ENCODE measurements at regions of chr18 and their contacts with region 1.

Region 1: DNA sequence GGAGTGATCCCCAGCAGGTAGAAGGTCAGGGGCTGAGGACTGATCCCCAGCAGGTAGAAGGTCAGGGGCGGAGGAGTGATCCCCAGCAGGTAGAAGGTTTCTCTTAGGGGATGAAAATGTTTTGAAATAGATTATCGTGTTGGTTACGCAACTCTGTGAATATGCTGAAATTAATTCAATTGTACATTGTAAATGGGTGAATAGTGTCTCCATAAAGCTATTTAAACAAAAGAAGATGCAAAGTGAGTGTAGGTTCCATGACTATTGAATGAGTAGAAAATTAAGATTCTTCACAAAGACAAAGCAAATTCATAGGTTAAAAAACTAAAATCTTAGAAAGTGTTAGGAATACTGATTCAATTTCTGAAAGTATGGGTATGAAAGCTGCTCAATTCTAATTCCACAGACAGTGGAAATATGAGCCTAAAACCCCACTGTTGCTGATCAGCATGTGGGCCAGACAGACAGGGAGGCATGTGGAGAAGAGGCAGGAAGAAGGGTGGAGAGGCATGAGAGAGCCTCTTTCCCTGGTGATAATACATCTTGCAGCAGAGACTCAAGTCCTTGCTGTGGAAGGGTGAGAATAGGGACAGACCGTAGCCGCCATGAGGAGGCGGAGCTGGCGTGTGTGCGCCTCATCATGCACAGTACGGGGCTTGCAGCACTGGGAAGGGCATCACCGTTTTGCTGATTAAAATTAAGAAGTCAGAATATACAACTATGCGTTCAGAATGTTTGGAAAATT is 85.9 kb upstream of the NFATC1 start:
- DNase-seq: no peak
- H3K4me3 ChIP-seq: no peak overlapping the region
- H3K27ac ChIP-seq: no peak overlapping the region
- H3K4me1 ChIP-seq: no peaks in the 10 kb centered on the region
- H3K27me3 ChIP-seq: no peaks in the 10 kb centered on the region
- CTCF ChIP-seq: no peak

Region 2: DNA sequence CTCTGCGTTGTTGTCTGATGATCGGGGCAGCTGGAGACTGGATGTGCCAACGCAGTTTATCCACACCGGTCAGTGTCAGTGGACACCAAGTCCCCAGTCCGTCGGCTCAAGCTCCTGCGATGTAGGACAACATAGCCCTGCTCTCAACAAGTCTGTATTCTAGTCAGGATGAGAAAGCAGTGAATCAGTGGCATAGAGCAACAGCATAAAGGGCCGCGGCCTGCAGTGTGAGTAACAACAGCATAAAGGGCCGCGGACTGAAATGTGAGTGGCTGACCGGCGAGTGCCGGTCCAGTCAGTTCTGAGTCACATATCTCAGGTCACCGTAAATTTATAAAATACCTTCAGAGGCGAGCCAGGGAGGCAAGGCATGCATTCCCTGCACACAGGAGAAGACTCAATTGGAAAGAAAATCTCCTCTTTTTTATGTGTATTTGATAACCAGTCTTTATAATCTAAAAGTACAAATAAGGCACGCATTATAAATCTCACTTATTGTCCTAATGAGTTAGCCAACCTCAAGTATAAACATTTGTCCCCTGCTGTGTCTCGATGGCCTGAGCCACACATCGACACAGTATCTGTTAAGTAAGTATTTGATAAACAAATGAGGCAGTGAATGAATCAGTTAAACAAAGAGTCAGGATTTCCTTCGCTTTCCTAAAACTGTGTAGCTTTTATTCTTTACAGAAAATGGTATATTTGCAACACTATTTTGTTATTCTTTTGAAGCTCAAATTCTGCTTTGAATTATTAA is 52.2 kb after region 1 on chr18:
- CTCF ChIA-PET with region 1: no interaction called
- dilution Hi-C with region 1: loop called (anchors 5 kb)
- in situ Hi-C with region 1: no loop called
- intact Hi-C with region 1: no loop called
- DNase-seq: no peak
- H3K4me3 ChIP-seq: no peak overlapping the region
- H3K27ac ChIP-seq: no peak overlapping the region
- H3K4me1 ChIP-seq: no peaks in the 10 kb centered on the region
- H3K27me3 ChIP-seq: no peaks in the 10 kb centered on the region
- CTCF ChIP-seq: no peak

Measured in mammary epithelial cell (primary cell).